ENCODE measurements at regions of chr1 and their contacts with region 1.

Region 1: GRCh38 chr1:30801771-30802198 is 44.2 kb upstream of the LAPTM5 start:
- DNase-seq: no peak
- H3K4me3 ChIP-seq: no peak overlapping the region
- H3K27me3 ChIP-seq: 0 out of 2 replicates have a peak, but pooled peaks cover 2% of the 10 kb centered on the region
- CTCF ChIP-seq: peak; percentile 97

Region 2: GRCh38 chr1:30437059-30437576 is 364.7 kb before region 1 on chr1:
- CTCF ChIA-PET with region 1: no interaction called
- POLR2A ChIA-PET with region 1: no interaction called
- DNase-seq: no peak
- H3K4me3 ChIP-seq: no peak overlapping the region
- H3K27me3 ChIP-seq: no peaks in the 10 kb centered on the region
- CTCF ChIP-seq: no peak

Region 3: DNA sequence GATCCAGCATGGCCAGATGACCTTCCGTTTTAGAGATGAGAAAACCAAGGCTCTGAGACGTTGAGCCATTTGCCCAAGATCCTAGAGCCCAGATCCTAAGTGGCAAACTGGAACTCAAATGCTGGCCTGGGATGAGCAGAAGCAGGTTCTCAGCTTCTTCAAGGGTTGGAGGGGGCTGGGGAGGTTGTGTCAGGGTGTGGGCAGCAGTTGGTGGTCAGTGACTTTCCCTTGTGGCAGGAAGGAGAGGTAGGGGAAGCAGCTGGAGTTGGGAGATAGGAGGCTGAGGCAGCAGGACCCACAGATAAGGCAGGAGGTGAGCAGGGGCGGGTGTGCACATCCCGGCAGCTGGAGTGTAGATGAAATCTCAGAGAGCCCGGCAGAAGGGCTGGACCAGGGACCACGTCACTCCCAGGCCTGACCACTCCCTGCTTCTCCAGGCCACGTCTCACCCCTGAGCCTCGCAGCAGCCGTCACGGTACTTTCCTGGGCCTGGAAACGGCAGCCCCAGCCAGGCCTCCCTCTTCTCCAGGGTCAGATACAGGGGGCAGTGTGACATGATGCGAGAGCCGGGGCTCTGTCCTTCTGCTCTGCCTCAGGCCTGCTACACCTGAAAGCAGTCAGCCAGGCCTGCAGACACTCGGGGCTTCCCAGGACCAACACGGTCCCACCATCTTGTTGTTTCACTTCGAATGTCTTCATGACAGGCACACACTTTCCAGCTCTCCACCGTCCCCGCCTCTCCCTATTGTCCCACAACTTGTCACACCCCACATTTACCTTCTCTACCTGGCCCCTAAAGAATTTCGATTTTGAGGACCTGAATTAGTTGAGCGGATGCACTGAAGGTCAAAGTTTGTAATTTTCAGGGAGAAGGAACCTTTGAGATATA is 32.7 kb before region 1 on chr1:
- CTCF ChIA-PET with region 1: no interaction called
- POLR2A ChIA-PET with region 1: no interaction called
- DNase-seq: no peak
- H3K4me3 ChIP-seq: no peak overlapping the region
- H3K27me3 ChIP-seq: peaks cover 9% of the 10 kb centered on the region
- CTCF ChIP-seq: no peak

Region 4: GRCh38 chr1:30779294-30780071 is 22.3 kb before region 1 on chr1:
- CTCF ChIA-PET with region 1: interaction called, 53 read pairs
- POLR2A ChIA-PET with region 1: no interaction called
- DNase-seq: peak; percentile 15
- H3K4me3 ChIP-seq: no peak overlapping the region
- H3K27me3 ChIP-seq: no peaks in the 10 kb centered on the region
- CTCF ChIP-seq: peak; percentile 92

Region 5: DNA sequence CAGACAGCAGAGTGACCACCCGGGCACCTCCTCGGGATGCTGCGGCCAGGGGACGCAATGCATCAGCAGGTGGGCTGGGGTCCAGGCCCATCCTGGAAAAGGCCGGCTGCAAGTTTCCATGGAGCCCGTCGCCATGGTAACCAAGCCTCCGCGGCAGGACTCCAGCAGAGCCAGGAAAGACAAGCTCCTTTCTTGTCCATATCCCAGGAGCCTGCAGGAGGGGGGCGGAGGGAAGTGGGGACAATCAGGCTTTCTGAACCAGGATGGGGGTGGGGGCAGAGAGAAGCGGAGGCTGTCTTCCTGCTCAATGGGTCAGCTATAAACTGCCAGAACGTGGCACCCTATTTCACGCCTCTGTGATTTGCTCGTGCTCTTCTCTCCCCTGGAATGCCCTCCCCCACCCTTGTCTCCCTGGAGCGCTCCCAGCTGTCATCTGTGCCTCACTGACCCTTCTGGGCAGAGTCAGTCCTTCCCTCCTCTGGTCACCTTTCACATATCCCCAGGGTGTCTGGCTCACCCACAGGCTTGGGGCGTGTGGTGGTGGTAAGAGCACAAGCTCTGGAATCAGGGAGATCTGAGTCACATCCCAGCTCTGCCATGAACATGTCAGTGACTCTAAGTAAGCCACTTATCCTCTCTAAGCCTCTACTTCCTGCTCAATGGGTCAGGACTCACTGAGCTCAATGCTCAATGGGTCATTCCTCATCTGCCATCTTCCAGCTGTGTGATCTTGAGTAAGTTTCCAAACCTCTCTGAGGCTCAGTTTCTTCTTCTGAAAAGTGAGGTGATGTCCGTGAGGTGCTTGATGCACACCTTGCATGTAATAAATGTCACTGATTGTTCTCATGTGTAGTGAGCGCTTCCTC is 14.7 kb after region 1 on chr1:
- CTCF ChIA-PET with region 1: interaction called, 41 read pairs
- POLR2A ChIA-PET with region 1: no interaction called
- DNase-seq: peak; percentile 77
- H3K4me3 ChIP-seq: no peak overlapping the region
- H3K27me3 ChIP-seq: no peaks in the 10 kb centered on the region
- CTCF ChIP-seq: no peak

Region 6: DNA sequence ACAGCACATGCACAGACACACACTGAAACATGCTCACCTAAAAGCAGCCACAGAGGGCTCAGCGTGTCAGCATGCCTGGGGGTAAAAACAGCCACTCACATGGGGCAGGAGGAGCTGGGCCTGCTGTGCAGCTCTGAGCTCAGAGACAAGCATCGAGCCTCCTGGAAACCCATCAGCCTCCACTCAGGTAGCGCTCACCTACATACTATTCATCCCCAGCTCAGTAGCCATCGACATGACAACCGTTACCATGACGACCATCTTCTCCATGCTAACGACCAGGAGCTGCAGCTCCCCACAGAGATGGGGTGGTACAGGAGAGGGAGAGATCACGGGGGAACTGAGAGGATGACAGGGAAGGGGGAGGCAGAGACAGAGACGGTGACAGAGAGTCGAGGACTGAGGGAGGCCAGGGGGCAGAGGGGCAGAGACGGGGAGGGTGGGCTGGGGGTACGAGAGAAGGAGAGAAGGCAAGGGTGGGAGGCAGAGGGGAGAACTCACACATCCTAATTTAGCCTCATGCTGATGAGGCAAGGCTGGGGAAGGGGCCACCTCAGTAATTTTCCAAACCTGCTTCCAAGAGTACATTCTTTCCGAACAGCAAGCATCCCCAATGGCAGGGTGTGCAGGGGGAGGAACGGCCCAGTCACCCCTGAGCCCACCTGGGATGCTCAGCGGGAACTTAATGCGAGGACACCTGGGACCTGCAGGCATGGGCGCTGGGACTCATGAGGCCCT is 78.3 kb after region 1 on chr1:
- CTCF ChIA-PET with region 1: interaction called, 10 read pairs
- POLR2A ChIA-PET with region 1: no interaction called
- DNase-seq: no peak
- H3K4me3 ChIP-seq: no peak overlapping the region
- H3K27me3 ChIP-seq: no peaks in the 10 kb centered on the region
- CTCF ChIP-seq: no peak

Region 7: DNA sequence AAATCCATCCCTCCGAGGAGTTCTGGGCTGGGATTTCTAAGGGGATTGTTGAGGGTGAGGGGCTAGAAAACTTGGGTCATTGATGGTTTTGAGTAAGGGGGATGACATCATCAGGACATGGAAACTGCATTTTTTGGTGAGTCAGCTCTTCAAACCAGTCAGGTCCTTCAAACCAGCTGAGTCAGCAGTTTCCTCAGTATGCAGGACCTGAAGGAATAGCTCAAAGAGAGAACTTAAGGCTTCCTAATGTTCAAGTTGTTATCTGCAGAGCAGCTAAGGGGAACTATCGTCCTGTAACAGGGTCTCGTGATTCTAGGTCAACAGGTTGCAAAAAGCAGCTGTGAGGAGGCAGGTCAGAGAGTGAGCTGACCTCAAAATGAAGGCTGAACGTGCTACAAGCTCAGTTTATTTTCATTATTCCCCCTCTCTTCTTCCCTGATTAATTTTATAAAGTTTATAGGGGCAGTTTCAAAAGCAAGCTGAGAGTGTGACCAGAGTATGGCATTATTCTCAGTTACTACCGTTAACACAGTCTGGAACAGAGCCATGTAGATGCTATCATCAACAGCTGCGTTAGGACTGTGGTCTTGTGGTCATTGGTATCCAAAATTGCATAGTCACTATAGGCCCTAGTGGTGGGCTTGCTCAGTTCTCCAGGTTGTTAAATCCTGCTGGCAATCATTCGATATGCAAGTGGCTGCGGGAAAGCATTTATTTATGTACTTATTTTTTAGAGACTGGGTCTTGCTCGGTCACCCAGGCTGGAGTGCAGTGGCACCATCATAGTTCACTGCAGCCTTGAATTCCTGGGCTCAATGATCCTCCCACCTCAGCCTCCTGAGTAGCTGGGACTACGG is 117.5 kb after region 1 on chr1:
- CTCF ChIA-PET with region 1: interaction called, 548 read pairs
- POLR2A ChIA-PET with region 1: no interaction called
- DNase-seq: no peak
- H3K4me3 ChIP-seq: no peak overlapping the region
- H3K27me3 ChIP-seq: no peaks in the 10 kb centered on the region
- CTCF ChIP-seq: no peak